ENCODE measurements at regions of chr1 and their contacts with region 1.

Region 1: GRCh38 chr1:56584910-56585528 is 5.7 kb upstream of the PLPP3 start:
- DNase-seq: peak; percentile 39
- H3K4me3 Mint-ChIP-seq: no peak overlapping the region
- H3K27ac Mint-ChIP-seq: no peak overlapping the region
- H3K4me1 Mint-ChIP-seq: peaks cover 6% of the 10 kb centered on the region
- H3K27me3 Mint-ChIP-seq: no peaks in the 10 kb centered on the region
- CTCF ChIP-seq: peak; percentile 61

Region 2: GRCh38 chr1:55284852-55285251 is 1300.2 kb before region 1 on chr1:
- CTCF ChIA-PET with region 1: interaction called, 3 read pairs
- intact Hi-C with region 1: loop called (anchors 1 kb)
- DNase-seq: peak; percentile 55
- H3K4me3 Mint-ChIP-seq: no peak overlapping the region
- H3K27ac Mint-ChIP-seq: no peak overlapping the region
- H3K4me1 Mint-ChIP-seq: peaks cover 13% of the 10 kb centered on the region
- H3K27me3 Mint-ChIP-seq: no peaks in the 10 kb centered on the region
- CTCF ChIP-seq: peak; percentile 70

Region 3: DNA sequence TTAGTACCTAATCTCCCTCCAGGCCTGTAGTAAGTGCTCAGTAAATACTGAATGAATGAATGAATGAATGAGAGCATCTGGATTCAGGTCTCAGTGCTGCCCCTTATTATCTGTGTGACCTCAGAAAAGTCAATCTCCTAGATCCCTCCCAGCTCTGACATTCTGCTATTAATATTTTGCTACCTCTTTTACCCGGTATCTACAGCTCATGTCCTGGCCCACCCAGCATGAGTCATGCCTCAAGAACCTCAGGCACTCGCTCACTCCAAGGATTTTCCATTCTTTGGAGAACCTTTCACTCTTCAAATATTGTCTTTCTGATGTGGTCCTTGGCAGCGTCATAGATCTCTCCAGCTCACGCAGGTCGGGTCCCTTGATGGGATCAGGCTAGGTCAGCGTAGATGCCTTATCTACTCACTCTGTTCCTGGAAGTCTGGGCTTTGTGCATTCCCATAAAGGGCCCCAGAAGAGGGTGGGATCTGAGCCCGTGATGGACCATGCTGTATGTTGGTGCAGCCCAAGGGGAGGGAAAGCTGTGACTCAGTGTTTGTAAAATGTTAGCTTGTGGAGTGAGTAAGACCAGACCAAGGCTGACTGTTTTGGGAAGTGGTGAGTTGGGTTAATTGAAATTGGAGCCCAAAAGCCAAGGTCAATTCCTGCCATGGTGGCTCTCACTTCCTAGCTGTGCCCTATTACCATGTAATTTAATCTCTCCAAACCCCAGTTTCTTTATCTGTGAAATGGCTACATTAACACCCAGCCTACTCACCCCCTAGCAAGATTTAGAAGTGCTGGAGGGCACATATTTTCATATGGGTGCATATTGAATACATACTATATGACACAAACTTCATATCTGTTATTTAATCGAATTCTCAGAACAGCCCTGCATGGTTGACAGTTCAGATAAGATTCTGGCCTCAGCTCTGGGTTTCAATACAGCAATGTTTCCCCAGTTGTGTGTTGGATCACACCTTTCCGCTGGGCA is 1155.8 kb before region 1 on chr1:
- CTCF ChIA-PET with region 1: no interaction called
- intact Hi-C with region 1: loop called (anchors 5 kb)
- DNase-seq: peak; percentile 90
- H3K4me3 Mint-ChIP-seq: no peak overlapping the region
- H3K27ac Mint-ChIP-seq: peak overlapping the region; percentile 79
- H3K4me1 Mint-ChIP-seq: peaks cover 52% of the 10 kb centered on the region
- H3K27me3 Mint-ChIP-seq: no peaks in the 10 kb centered on the region
- CTCF ChIP-seq: no peak

Region 4: DNA sequence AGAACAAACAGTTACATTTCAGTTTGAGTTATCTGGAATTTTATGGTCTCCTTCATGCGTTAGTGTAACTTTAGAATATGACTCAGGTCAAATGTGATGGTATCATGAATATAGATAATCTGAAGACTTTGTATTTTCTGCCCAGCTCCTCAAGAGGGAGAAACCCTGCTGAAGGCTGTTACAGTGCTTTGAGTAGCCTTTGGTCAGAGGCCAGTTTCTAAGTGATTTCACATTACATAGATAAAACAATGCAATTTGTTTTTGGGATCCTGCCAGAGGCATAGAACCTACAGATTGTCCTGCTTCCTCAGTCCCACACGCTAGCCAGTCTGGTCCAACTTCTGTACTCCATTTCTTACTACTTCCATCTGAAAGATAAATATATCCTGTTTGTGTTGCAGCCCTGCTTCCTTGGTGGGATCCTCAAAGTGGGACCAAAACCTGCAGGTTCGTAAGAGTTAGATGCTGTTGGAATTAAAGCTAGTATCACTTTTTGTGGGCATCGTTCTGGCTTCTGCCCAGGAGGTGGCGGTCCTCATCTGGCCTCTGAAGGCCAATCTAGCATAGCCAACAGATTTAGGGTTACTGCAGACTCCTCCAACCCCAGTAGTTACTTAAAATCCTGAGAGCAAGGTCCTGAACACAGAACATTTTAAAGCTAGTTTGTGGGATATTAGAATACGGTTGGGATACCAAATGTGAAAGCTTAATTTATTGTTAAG is 724.1 kb before region 1 on chr1:
- CTCF ChIA-PET with region 1: interaction called, 3 read pairs
- intact Hi-C with region 1: loop called (anchors 1 kb)
- DNase-seq: no peak
- H3K4me3 Mint-ChIP-seq: no peak overlapping the region
- H3K27ac Mint-ChIP-seq: no peak overlapping the region
- H3K4me1 Mint-ChIP-seq: no peaks in the 10 kb centered on the region
- H3K27me3 Mint-ChIP-seq: peaks cover 16% of the 10 kb centered on the region
- CTCF ChIP-seq: no peak

Region 5: GRCh38 chr1:56709269-56709880 is 124.4 kb after region 1 on chr1:
- CTCF ChIA-PET with region 1: no interaction called
- intact Hi-C with region 1: loop called (anchors 5 kb)
- DNase-seq: peak; percentile 22
- H3K4me3 Mint-ChIP-seq: no peak overlapping the region
- H3K27ac Mint-ChIP-seq: no peak overlapping the region
- H3K4me1 Mint-ChIP-seq: no peaks in the 10 kb centered on the region
- H3K27me3 Mint-ChIP-seq: no peaks in the 10 kb centered on the region
- CTCF ChIP-seq: peak; percentile 47

Region 6: DNA sequence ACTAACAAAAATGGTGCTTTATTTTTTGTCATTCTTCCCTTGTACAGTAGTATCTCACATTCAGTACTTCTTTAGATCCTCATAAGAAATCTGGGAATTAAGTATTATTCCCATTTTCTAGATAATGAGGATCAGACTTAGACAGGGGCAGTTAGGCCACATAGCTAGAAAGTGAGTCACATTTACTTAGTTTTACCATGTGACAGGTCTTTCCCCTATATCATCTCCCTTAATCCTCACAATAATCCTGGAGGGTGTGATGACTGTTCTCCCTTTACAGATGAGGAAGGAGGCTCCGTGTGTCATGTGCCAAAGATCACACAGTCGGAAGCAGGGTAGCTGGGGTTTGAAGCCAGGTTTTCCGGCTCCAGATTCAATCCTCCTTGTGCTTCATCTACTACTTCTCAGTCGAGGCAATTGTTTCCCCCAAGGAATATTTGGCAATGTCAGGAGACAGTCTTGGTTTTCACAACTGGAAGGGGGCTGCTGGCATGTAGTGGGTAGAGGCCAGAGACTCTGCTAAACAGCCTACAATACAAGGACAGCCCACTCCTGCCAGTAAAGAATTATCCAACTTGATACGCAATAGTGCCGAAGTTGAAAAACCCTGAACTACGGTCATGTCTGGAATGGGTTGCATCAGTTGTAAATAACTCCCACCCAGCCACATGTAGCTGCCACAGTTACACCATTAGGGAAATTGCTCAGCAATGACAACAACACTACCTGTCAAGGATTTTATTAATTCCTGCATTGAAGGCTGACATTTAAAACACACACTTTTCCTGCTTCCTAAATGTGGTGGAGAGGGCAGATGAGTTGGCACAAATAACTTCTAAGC is 326.3 kb after region 1 on chr1:
- CTCF ChIA-PET with region 1: no interaction called
- intact Hi-C with region 1: no loop called
- DNase-seq: no peak
- H3K4me3 Mint-ChIP-seq: no peak overlapping the region
- H3K27ac Mint-ChIP-seq: no peak overlapping the region
- H3K4me1 Mint-ChIP-seq: no peaks in the 10 kb centered on the region
- H3K27me3 Mint-ChIP-seq: peaks cover 8% of the 10 kb centered on the region
- CTCF ChIP-seq: no peak